ENCODE measurements at regions of chr12 and their contacts with region 1.

Region 1: GRCh38 chr12:124036674-124037109 is 63.7 kb downstream of the ZNF664 start:
- DNase-seq: peak; percentile 65
- ATAC-seq: no peak
- H3K4me3 Mint-ChIP-seq: no peak overlapping the region
- H3K27ac Mint-ChIP-seq: no peak overlapping the region
- H3K4me1 Mint-ChIP-seq: no peaks in the 10 kb centered on the region
- H3K27me3 Mint-ChIP-seq: peaks cover 4% of the 10 kb centered on the region

Region 2: DNA sequence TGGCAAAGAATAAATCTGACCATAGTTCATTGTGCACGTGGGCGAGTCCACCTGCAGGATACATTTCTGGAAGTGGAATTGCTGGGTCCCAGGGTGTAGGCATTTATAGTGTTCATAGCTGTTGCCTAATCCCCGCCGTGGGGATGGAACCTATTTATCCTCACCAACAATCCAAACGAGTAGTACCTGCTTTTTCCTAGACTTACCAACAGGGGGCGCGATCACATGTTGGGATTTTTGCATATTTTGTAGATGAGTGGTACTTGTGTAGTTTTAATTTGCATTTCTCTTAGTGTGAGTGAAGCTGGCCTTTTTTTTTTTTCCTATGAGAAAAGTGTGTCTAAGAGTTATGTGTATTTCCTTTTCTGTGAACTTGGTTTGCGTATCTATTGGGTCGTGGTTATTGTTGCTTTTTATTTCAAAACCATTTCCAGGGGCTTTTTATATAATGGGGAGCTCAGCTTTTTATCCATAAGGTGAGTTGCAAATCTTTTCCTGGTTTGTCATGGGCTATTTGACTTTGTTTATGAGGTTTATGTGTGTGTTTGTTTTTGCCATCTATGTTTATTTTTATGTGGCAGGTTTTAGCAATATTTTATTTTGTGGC is 131.3 kb before region 1 on chr12:
- CTCF ChIA-PET with region 1: interaction called, 7 read pairs
- POLR2A ChIA-PET with region 1: no interaction called
- intact Hi-C with region 1: loop called (anchors 1 to 2 kb)
- DNase-seq: peak; percentile 83
- ATAC-seq: peak; percentile 63
- H3K4me3 Mint-ChIP-seq: no peak overlapping the region
- H3K27ac Mint-ChIP-seq: no peak overlapping the region
- H3K4me1 Mint-ChIP-seq: peaks cover 9% of the 10 kb centered on the region
- H3K27me3 Mint-ChIP-seq: peaks cover 7% of the 10 kb centered on the region

Region 3: DNA sequence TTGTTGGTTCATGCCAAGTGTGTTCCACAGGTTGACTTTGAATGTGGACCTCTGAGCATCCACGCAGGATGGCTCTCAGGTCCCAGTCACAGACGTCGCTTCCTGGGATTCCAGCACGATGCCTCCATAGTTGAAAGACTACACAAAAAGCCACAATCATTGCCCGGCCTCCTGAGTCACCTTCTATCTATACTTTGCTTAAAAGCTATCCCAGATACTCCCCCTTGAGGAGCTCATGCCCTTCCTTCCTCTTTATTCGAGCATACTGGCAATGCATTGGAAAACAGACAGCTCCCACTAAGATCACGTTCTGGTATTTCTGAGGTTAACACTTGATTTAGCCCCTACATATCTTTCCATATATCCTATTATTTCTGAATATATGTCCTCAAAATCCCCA is 23.6 kb before region 1 on chr12:
- CTCF ChIA-PET with region 1: interaction called, 22 read pairs
- POLR2A ChIA-PET with region 1: no interaction called
- intact Hi-C with region 1: no loop called
- DNase-seq: no peak
- ATAC-seq: no peak
- H3K4me3 Mint-ChIP-seq: no peak overlapping the region
- H3K27ac Mint-ChIP-seq: no peak overlapping the region
- H3K4me1 Mint-ChIP-seq: peaks cover 10% of the 10 kb centered on the region
- H3K27me3 Mint-ChIP-seq: no peaks in the 10 kb centered on the region

Region 4: DNA sequence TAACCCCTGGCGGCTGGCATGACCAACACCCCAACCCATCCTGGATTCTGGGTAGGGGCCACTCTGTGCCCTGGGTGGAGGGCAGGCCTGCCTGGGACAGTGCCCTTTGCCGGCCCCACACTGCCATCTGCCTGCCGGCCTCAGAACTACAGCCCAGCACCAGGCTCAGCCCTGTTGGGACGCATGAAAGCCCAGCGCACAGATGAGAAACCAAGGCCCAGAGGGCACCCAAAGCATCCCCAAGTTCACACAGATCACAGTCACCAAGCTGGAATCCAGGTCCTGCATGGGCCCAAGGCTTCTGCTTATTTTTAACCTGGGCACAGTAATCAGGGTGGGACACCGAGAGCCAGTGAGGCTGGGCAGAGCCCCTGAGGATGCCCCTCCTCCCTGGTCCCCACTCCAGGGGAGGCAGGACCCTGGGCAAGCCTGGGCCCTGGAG is 284.4 kb after region 1 on chr12:
- CTCF ChIA-PET with region 1: interaction called, 13 read pairs
- POLR2A ChIA-PET with region 1: no interaction called
- intact Hi-C with region 1: loop called (anchors 1 kb)
- DNase-seq: peak; percentile 82
- ATAC-seq: peak; percentile 92
- H3K4me3 Mint-ChIP-seq: no peak overlapping the region
- H3K27ac Mint-ChIP-seq: no peak overlapping the region
- H3K4me1 Mint-ChIP-seq: no peaks in the 10 kb centered on the region
- H3K27me3 Mint-ChIP-seq: no peaks in the 10 kb centered on the region

Region 5: GRCh38 chr12:124553862-124554428 is 517.3 kb after region 1 on chr12:
- CTCF ChIA-PET with region 1: no interaction called
- POLR2A ChIA-PET with region 1: no interaction called
- intact Hi-C with region 1: no loop called
- DNase-seq: peak; percentile 48
- ATAC-seq: no peak
- H3K4me3 Mint-ChIP-seq: no peak overlapping the region
- H3K27ac Mint-ChIP-seq: no peak overlapping the region
- H3K4me1 Mint-ChIP-seq: peaks cover 78% of the 10 kb centered on the region
- H3K27me3 Mint-ChIP-seq: no peaks in the 10 kb centered on the region

Region 6: GRCh38 chr12:124898200-124898922 is 861.7 kb after region 1 on chr12:
- CTCF ChIA-PET with region 1: no interaction called
- POLR2A ChIA-PET with region 1: no interaction called
- intact Hi-C with region 1: loop called (anchors 2 kb)
- DNase-seq: peak; percentile 89
- ATAC-seq: peak; percentile 94
- H3K4me3 Mint-ChIP-seq: no peak overlapping the region
- H3K27ac Mint-ChIP-seq: no peak overlapping the region
- H3K4me1 Mint-ChIP-seq: peaks cover 16% of the 10 kb centered on the region
- H3K27me3 Mint-ChIP-seq: no peaks in the 10 kb centered on the region

Measured in activated CD4-positive, alpha-beta T cell treated with anti-CD3 and anti-CD28 coated beads for 36 hours (primary cell).